ENCODE measurements at regions of chr5 and their contacts with region 1.

Region 1: GRCh38 chr5:172697123-172698121 is 56.4 kb downstream of the NEURL1B start:
- DNase-seq: peak; percentile 82 to 90
- H3K4me3 ChIP-seq: peak overlapping the region; percentile 63 to 91 (median 67)
- H3K27ac ChIP-seq: peak overlapping the region; percentile 75 to 85
- H3K4me1 ChIP-seq: no peaks in the 10 kb centered on the region
- H3K27me3 ChIP-seq: no peaks in the 10 kb centered on the region
- CTCF ChIP-seq: peak; percentile 86 to 96 (median 95)
- POLR2A ChIP-seq: no peak

Region 2: GRCh38 chr5:172106511-172107356 is 590.7 kb before region 1 on chr5:
- intact Hi-C with region 1: loop called (anchors 10 kb)
- DNase-seq: peak in 1 of 2 donors; percentile 69
- H3K4me3 ChIP-seq: peak overlapping the region in 2 of 3 donors; percentile 43 to 60
- H3K27ac ChIP-seq: no peak overlapping the region
- H3K4me1 ChIP-seq: peaks cover 3 to 7% of the 10 kb centered on the region in 2 donors
- H3K27me3 ChIP-seq: no peaks in the 10 kb centered on the region
- CTCF ChIP-seq: peak; percentile 71 to 86 (median 81)
- POLR2A ChIP-seq: no peak

Region 3: GRCh38 chr5:172479044-172479783 is 218.2 kb before region 1 on chr5:
- intact Hi-C with region 1: loop called (anchors 2 kb)
- DNase-seq: peak; percentile 62 to 83
- H3K4me3 ChIP-seq: no peak overlapping the region
- H3K27ac ChIP-seq: peak overlapping the region in 1 of 2 donors; percentile 53
- H3K4me1 ChIP-seq: no peaks in the 10 kb centered on the region
- H3K27me3 ChIP-seq: no peaks in the 10 kb centered on the region
- CTCF ChIP-seq: peak; percentile 81 to 98 (median 91)
- POLR2A ChIP-seq: no peak

Region 4: DNA sequence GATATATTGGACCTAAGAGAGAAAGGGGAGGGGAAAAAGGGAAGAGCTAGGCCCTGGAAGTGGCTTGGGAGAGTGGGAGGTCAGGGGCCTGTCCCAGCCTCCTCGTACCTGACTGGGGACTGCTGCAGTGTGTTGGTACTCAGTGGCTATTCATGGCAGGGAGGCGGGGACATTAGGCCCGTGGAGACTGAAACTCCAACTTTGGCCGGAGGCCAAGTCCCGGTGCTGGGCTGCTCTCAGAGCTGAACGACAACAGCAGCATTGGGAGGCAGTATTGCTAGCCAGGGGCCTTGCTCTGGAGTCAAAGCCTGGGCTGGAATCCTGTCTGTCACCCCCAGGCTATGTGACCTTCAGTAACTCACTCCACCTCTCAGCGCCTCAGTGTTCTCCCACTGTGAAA is 18.5 kb before region 1 on chr5:
- intact Hi-C with region 1: no loop called
- DNase-seq: peak in 1 of 2 donors; percentile 21
- H3K4me3 ChIP-seq: no peak overlapping the region
- H3K27ac ChIP-seq: peak overlapping the region; percentile 31 to 40
- H3K4me1 ChIP-seq: no peaks in the 10 kb centered on the region
- H3K27me3 ChIP-seq: no peaks in the 10 kb centered on the region
- CTCF ChIP-seq: no peak
- POLR2A ChIP-seq: no peak

Measured in breast epithelium (tissue), 4 donors.